SK-N-SH (cell line): ENCODE measurements at regions of chr4 and their contacts with region 1.

Region 1: GRCh38 chr4:125314676-125315575 is at the start of gene FAT4:
- DNase-seq: peak; percentile 89
- H3K4me3 ChIP-seq: peak within 1 kb of the TSS; percentile 93 to 100
- H3K27ac ChIP-seq: peak within 1 kb of the TSS; percentile 74 to 84
- H3K4me1 ChIP-seq: peaks cover 5 to 28% of the 10 kb centered on the region in 2 experiments; a peak in 3 of 4 replicates
- H3K27me3 ChIP-seq: no peaks in the 10 kb centered on the region
- CTCF ChIP-seq: no peak
- EP300 ChIP-seq: peak in 1 of 2 experiments; percentile 45; a peak in 1 of 4 replicates
- RAD21 ChIP-seq: no peak
- polyA plus RNA-seq, gene FAT4: 6.6 and 8.7 TPM in 2 replicates

Region 2: DNA sequence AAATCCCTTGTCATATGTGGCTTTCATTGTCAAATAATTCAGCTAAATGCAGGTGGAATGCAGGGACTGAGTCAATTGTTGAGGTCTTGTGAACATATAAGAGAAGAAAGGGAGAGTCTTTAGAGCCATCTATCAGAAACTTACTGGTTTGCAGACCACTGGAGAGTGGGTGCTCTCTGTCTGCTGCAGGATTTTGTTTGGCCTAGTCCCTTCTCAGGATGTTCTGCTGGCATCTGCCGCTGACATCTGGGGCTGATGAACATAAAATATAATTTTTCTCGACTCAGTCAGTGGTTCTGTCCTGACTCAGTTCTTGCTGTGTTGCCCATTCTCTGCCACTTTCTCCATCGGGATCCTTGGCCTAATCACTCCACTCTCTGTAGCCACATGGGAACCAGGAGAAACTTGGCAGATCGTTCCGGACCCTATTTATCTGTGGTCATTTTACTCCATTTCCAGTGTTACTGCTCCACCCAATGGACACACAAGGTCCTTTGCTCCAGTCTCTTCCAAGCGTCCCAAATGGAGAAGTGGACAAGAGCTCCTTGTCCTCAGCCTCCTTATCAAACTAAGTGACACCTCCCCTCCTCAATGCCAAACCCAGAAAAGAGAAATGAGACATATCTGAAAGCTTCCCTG is 436.0 kb after region 1 on chr4:
- CTCF ChIA-PET with region 1: interaction called, 10 read pairs
- POLR2A ChIA-PET with region 1: no interaction called
- DNase-seq: peak; percentile 29
- H3K4me3 ChIP-seq: no peak overlapping the region
- H3K27ac ChIP-seq: no peak overlapping the region
- H3K4me1 ChIP-seq: no peaks in the 10 kb centered on the region
- H3K27me3 ChIP-seq: no peaks in the 10 kb centered on the region
- CTCF ChIP-seq: peak; percentile 45
- EP300 ChIP-seq: no peak
- RAD21 ChIP-seq: peak; percentile 68

Region 3: DNA sequence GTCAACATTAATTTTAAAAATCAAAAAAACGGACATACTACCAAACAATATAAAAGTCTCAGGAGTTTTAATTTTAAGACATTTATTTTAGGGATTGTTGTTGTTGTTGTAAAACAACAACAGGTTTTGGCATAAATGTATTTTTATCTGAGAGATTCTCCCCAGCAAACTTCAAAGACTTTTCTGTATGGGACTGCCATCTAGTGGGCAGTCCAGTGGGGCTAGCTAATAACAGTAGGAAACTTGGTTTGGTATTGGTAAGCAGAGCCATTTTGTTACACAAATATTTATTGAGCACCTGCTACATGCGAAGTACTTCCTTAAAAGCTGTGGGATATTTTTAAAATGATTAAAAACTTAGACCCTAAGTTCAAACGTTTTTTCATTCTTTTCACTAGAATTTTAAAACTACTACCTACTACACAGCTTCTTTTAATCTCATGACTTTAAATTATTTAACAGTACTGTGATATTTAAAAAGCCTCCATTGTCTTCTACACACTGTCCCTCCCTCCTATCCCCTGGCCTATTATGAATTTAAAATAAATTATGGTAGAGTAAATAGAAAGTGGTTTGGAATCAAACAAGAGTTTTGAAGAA is 1289.4 kb after region 1 on chr4:
- CTCF ChIA-PET with region 1: interaction called, 26 read pairs
- POLR2A ChIA-PET with region 1: no interaction called
- DNase-seq: peak; percentile 53
- H3K4me3 ChIP-seq: no peak overlapping the region; a peak in 1 of 4 replicates
- H3K27ac ChIP-seq: no peak overlapping the region
- H3K4me1 ChIP-seq: peaks cover 0 to 4% of the 10 kb centered on the region in 2 experiments; a peak in 1 of 4 replicates
- H3K27me3 ChIP-seq: no peaks in the 10 kb centered on the region
- CTCF ChIP-seq: peak; percentile 89
- EP300 ChIP-seq: no peak
- RAD21 ChIP-seq: peak; percentile 84